ENCODE measurements at regions of chr11 and their contacts with region 1.

Region 1: GRCh38 chr11:18721561-18722292 is 4.3 kb downstream of the IGSF22 start:
- DNase-seq: peak; percentile 32
- H3K4me3 Mint-ChIP-seq: peak overlapping the region; percentile 84
- H3K27ac Mint-ChIP-seq: no peak overlapping the region
- H3K4me1 Mint-ChIP-seq: peaks cover 7% of the 10 kb centered on the region
- H3K27me3 Mint-ChIP-seq: peaks cover 15% of the 10 kb centered on the region

Region 2: GRCh38 chr11:18698341-18699268 is 23.1 kb before region 1 on chr11 and contains the start of gene TMEM86A:
- intact Hi-C with region 1: loop called (anchors 1 kb)
- DNase-seq: peak; percentile 83
- H3K4me3 Mint-ChIP-seq: peak within 1 kb of the TSS; percentile 66
- H3K27ac Mint-ChIP-seq: no peak within 1 kb of the TSS
- H3K4me1 Mint-ChIP-seq: peaks cover 12% of the 10 kb centered on the region
- H3K27me3 Mint-ChIP-seq: peaks cover 31% of the 10 kb centered on the region
- total RNA-seq, gene TMEM86A: 0.11 and 0.55 TPM in 2 replicates

Measured in activated T-helper 2 cell treated with anti-CD3 and anti-CD28 coated beads, Interferon-gamma antibody, Interleukin-2, Interleukin-4, amounts not matched to agents 10 μg/mL and 5 μg/mL and 100 μg/mL, durations not matched to agents 14 hours and 24 hours and 36 hours (primary cell).